GM13977 (cell line): ENCODE measurements at regions of chr3 and their contacts with region 1.

Region 1: DNA sequence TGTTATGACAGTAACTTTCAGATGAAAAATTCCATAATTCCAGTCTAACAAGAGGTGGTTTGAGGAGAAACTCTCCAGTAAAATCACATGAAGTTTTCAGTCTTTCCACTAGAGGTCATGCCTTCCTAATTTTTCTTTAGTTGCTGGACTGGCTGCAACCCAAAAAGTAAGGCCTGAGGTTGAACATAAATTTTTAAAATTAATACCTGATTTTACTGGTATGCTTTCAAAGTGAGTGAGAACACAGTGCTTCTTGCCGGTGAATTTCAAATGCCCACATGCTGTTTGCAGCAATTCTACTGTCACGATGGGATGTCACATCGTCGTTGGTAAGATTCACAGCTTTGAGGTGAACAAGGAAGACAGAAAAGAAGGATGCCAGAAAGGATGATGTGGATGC is 89.0 kb upstream of the FGF12 start:
- DNase-seq: no peak
- CTCF ChIP-seq: peak; percentile 53

Region 2: GRCh38 chr3:192917404-192918274 is 101.3 kb after region 1 on chr3 and contains the start of gene MB21D2:
- in situ Hi-C with region 1: loop called (anchors 10 kb)
- DNase-seq: peak; percentile 87
- CTCF ChIP-seq: no peak

Region 3: GRCh38 chr3:193040836-193041672 is 224.7 kb after region 1 on chr3:
- in situ Hi-C with region 1: loop called (anchors 5 kb)
- DNase-seq: peak; percentile 62
- CTCF ChIP-seq: peak; percentile 54